PC-3 (cell line): ENCODE measurements at regions of chr11 and their contacts with region 1.

Region 1: GRCh38 chr11:31641477-31642062 is 132.0 kb downstream of the ELP4 start:
- DNase-seq: peak; percentile 70
- ATAC-seq: no peak
- H3K4me3 ChIP-seq: no peak overlapping the region
- H3K27ac ChIP-seq: no peak overlapping the region
- H3K4me1 ChIP-seq: peaks cover 28% of the 10 kb centered on the region
- H3K27me3 ChIP-seq: no peaks in the 10 kb centered on the region
- CTCF ChIP-seq: peak; percentile 72

Region 2: GRCh38 chr11:31397239-31397834 is 244.2 kb before region 1 on chr11:
- CTCF ChIA-PET with region 1: no interaction called
- POLR2A ChIA-PET with region 1: no interaction called
- intact Hi-C with region 1: loop called (anchors 2 kb)
- DNase-seq: peak; percentile 56
- ATAC-seq: no peak
- H3K4me3 ChIP-seq: no peak overlapping the region
- H3K27ac ChIP-seq: no peak overlapping the region
- H3K4me1 ChIP-seq: no peaks in the 10 kb centered on the region
- H3K27me3 ChIP-seq: no peaks in the 10 kb centered on the region
- CTCF ChIP-seq: peak; percentile 75

Region 3: GRCh38 chr11:31487848-31488247 is 153.7 kb before region 1 on chr11:
- CTCF ChIA-PET with region 1: no interaction called
- POLR2A ChIA-PET with region 1: no interaction called
- intact Hi-C with region 1: loop called (anchors 5 kb)
- DNase-seq: peak; percentile 70
- ATAC-seq: peak; percentile 59
- H3K4me3 ChIP-seq: no peak overlapping the region
- H3K27ac ChIP-seq: no peak overlapping the region
- H3K4me1 ChIP-seq: no peaks in the 10 kb centered on the region
- H3K27me3 ChIP-seq: no peaks in the 10 kb centered on the region
- CTCF ChIP-seq: peak; percentile 72

Region 4: DNA sequence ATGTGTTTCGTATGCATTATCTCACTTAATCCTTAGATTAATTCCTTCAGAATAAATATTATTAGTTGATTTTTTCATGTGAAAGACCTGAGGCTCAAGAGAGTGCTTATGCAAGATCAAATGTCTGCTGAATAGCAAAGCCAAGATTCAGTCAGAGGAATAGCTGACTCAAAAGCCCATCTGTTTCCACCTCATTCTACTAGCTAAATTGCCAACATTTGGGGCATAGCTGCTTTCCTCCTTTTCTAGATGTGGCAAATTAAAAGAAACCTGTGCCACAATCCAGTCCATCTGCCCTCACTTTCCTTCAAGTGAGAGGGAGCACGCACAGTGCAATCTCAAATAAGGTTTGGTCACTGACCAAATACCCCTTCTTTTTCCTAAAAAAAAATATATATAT is 48.5 kb after region 1 on chr11:
- CTCF ChIA-PET with region 1: interaction called, 4 read pairs
- POLR2A ChIA-PET with region 1: no interaction called
- intact Hi-C with region 1: loop called (anchors 2 kb)
- DNase-seq: no peak
- ATAC-seq: peak; percentile 33
- H3K4me3 ChIP-seq: no peak overlapping the region
- H3K27ac ChIP-seq: no peak overlapping the region
- H3K4me1 ChIP-seq: peaks cover 28% of the 10 kb centered on the region
- H3K27me3 ChIP-seq: no peaks in the 10 kb centered on the region
- CTCF ChIP-seq: no peak

Region 5: DNA sequence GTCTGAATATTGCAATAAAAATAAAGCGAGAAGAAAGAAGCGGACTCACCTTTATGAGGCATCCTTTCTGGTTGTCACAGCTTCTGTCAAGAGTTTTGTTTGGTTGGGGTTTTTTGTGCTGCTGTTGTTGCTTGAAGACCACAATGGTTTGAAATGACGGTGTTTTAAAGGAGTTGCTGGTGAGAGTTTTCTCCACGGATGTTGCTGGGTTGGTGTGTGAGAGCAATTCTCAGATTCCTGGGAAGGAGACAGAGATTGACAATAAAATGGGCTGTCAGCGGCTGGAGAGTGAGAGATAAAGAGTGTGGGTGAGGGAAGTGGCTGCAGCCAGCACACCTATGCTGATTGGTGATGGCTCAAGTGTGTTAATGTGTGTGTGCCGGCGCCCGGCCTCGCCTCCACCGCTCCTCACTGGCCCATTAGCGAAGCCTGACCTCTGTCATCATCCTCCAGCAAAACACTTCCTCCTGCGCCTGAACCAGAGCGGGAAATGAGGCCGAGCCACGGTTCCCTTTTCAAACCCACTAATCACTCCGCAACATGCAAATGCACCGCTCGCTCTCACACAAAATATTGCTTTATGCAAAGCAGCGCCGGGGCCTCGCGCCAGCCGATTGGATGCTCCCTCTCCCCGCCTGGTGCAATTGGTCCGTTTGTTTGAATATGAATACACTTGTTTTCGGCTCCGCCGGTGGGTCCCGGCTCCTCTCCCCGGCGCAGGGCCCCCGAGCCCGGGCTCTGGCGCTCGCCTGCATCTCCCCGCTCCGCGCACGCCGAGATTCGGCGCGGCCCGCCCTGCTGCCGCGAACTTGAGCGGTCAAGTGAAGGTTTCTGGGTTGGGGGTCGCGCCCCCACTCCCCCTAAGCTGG is 169.4 kb after region 1 on chr11 and contains the start of gene PAX6:
- CTCF ChIA-PET with region 1: interaction called, 3 read pairs
- POLR2A ChIA-PET with region 1: interaction called, 3 read pairs
- intact Hi-C with region 1: loop called (anchors 2 kb)
- DNase-seq: peak; percentile 74
- ATAC-seq: peak; percentile 39
- H3K4me3 ChIP-seq: peak within 1 kb of the TSS; percentile 93
- H3K27ac ChIP-seq: peak within 1 kb of the TSS; percentile 57
- H3K4me1 ChIP-seq: peaks cover 36% of the 10 kb centered on the region
- H3K27me3 ChIP-seq: no peaks in the 10 kb centered on the region
- CTCF ChIP-seq: no peak
- total RNA-seq, gene PAX6: 14.6 and 25.7 TPM in 2 replicates

Region 6: DNA sequence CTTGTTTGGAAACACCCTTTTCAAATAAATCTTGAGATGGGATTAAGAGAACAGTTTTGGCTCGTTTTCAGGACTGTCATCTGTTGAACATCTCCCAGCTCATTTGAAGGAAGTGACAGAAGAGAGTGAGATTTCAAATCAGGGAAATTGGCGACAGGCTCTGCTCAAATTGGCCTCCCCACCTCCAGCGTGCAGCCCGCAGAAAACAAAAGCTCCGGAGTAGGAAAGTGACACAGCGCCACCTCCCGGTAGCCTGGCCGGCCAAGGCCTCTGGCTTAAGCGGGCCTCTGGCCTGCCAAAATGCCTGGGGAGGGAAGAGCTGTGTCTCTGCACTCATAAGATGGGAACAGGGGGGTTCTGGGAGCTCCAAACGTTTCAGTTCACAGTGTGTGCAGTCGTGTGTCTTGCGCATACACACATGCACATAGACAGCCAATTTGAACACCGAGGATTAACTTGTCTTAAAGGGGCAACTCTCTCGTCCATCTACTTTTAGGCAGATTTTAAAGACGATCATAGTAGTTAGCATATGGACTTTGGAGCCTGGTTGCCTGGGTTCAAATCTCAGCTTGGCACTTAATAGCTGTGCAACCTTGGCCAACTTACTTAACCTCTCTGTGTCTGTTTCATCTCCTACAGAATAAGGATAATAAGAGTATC is 316.6 kb after region 1 on chr11:
- CTCF ChIA-PET with region 1: no interaction called
- POLR2A ChIA-PET with region 1: no interaction called
- intact Hi-C with region 1: loop called (anchors 5 kb)
- DNase-seq: peak; percentile 77
- ATAC-seq: peak; percentile 61
- H3K4me3 ChIP-seq: no peak overlapping the region
- H3K27ac ChIP-seq: no peak overlapping the region
- H3K4me1 ChIP-seq: peaks cover 16% of the 10 kb centered on the region
- H3K27me3 ChIP-seq: no peaks in the 10 kb centered on the region
- CTCF ChIP-seq: peak; percentile 88

Region 7: GRCh38 chr11:32006799-32007388 is 365.3 kb after region 1 on chr11:
- CTCF ChIA-PET with region 1: interaction called, 3 read pairs
- POLR2A ChIA-PET with region 1: no interaction called
- intact Hi-C with region 1: loop called (anchors 1 kb)
- DNase-seq: peak; percentile 71
- ATAC-seq: peak; percentile 55
- H3K4me3 ChIP-seq: no peak overlapping the region
- H3K27ac ChIP-seq: no peak overlapping the region
- H3K4me1 ChIP-seq: peaks cover 15% of the 10 kb centered on the region
- H3K27me3 ChIP-seq: peaks cover 40% of the 10 kb centered on the region
- CTCF ChIP-seq: peak; percentile 79